A673 (cell line): ENCODE measurements at regions of chr4 and their contacts with region 1.

Region 1: GRCh38 chr4:16196478-16197393 is 29.5 kb downstream of the TAPT1 start:
- DNase-seq: peak; percentile 92
- H3K4me3 ChIP-seq: peak overlapping the region; percentile 24
- H3K27ac ChIP-seq: peak overlapping the region; percentile 47
- H3K4me1 ChIP-seq: peaks cover 60% of the 10 kb centered on the region
- H3K27me3 ChIP-seq: no peaks in the 10 kb centered on the region
- CTCF ChIP-seq: peak; percentile 66

Region 2: GRCh38 chr4:16026160-16026761 is 170.5 kb before region 1 on chr4:
- CTCF ChIA-PET with region 1: interaction called, 3 read pairs
- POLR2A ChIA-PET with region 1: no interaction called
- intact Hi-C with region 1: loop called (anchors 1 kb)
- DNase-seq: peak; percentile 75
- H3K4me3 ChIP-seq: peak overlapping the region; percentile 29
- H3K27ac ChIP-seq: no peak overlapping the region
- H3K4me1 ChIP-seq: peaks cover 32% of the 10 kb centered on the region
- H3K27me3 ChIP-seq: no peaks in the 10 kb centered on the region
- CTCF ChIP-seq: peak; percentile 87

Region 3: DNA sequence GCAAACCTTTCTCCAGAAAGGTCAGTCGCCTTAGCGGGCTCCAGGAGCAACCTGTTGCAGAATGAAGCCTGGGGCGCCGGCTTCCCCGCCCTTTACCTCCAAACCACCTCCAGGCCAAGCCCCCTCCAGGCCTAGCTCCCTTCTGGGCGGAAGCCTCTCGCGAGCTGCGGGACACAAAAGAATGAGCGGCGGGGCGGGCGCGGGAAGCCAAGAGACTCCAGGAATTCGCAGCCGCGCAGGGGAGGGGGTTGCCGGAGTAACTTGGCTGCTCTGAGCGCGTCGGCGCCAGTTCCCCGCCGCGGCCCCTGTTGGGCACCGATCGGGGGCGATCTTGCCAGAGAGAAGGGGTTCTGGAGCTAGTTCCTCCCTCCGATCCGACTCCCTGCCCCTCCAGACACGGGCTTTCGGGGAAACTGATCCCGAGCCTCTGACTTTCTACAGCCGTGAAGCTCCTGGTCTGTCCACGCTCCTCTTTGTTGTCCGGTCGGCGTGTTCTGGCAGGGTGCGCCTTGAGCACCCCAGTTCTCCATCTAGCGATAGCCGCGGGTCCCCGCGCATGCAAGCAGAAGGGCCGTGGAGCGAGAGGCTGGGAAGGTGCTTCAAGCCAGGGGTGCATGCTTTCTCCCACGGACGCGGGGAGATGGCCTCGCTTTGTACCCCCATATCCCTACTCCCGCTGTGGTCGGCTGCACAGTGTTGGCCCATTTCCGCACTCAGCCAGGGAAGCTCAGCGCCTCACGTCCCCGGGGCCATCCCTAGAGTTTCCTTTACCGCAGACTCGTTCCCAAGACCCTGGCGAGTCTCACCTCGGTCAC is 114.1 kb before region 1 on chr4:
- CTCF ChIA-PET with region 1: interaction called, 3 read pairs
- POLR2A ChIA-PET with region 1: no interaction called
- intact Hi-C with region 1: loop called (anchors 5 kb)
- DNase-seq: peak; percentile 81
- H3K4me3 ChIP-seq: peak overlapping the region; percentile 52
- H3K27ac ChIP-seq: peak overlapping the region; percentile 10
- H3K4me1 ChIP-seq: no peaks in the 10 kb centered on the region
- H3K27me3 ChIP-seq: peaks cover 42% of the 10 kb centered on the region
- CTCF ChIP-seq: 0 out of 2 replicates have a peak, but pooled peaks have one; percentile 9

Region 4: DNA sequence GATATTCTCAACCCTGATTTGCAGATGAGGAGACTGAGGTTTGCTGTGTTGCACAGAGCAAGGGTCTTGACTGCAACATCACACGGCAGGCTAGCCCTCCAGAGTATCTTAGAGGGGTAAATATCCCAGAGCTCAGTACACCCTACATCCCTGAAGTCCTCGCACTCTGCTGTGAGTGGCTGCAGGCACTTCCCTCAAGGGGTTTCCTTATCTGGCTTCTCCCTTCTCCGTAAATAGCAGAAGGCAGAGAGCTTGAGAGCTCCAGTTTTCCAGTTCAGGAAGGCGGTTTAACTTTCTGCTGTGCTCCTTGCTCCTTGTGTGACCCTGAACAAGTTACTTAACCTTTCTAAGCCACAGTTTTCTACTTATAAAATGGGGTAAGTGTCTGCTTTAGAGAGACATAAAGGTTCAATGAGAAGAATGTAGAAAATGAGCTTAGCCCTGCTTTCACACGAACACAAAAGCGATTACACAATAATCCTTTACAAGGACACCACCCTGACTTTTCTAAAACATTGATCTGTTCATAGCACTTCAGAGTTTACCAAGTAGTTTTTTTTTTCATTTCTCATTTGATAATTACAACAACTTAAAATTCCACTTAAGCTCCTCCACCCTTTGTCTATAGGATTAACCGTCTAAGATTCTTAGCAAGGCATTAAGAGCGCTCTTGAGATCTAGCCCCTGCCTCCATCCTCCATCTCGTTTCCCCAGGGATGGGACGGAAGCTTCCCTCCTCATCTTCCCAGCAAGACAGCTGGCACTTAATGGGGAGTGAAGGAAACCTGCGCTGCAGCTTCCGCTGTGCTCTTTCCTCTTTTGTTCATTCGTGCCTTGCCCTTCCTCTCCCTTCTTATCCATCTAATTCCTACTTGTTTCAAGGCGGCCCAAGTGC is 38.9 kb before region 1 on chr4:
- CTCF ChIA-PET with region 1: interaction called, 11 read pairs
- POLR2A ChIA-PET with region 1: no interaction called
- intact Hi-C with region 1: loop called (anchors 2 kb)
- DNase-seq: peak; percentile 99
- H3K4me3 ChIP-seq: no peak overlapping the region
- H3K27ac ChIP-seq: peak overlapping the region; percentile 35
- H3K4me1 ChIP-seq: peaks cover 69% of the 10 kb centered on the region
- H3K27me3 ChIP-seq: no peaks in the 10 kb centered on the region
- CTCF ChIP-seq: no peak

Region 5: DNA sequence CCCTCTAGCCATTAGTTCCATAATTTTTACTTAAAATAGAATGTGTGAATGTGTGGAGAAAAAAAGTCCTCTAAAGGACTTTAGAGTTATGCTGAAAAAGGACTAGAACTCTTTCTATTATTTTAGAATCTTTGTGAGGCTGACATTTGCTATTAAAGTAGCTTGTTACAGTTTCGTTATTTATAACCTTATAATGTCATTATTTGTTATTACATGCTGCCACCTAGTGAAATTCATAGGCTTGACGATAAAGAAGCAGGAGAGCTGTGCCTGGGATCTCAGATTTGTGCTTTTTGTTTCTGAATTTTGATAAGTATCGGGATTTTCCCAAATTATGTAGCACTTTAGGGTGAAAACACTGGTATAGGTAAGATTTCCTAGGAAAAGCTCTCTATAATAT is 68.1 kb after region 1 on chr4:
- CTCF ChIA-PET with region 1: interaction called, 3 read pairs
- POLR2A ChIA-PET with region 1: interaction called, 3 read pairs
- intact Hi-C with region 1: loop called (anchors 5 kb)
- DNase-seq: peak; percentile 67
- H3K4me3 ChIP-seq: no peak overlapping the region
- H3K27ac ChIP-seq: no peak overlapping the region
- H3K4me1 ChIP-seq: peaks cover 5% of the 10 kb centered on the region
- H3K27me3 ChIP-seq: no peaks in the 10 kb centered on the region
- CTCF ChIP-seq: peak; percentile 65

Region 6: GRCh38 chr4:16757080-16757521 is 560.4 kb after region 1 on chr4:
- CTCF ChIA-PET with region 1: no interaction called
- POLR2A ChIA-PET with region 1: no interaction called
- intact Hi-C with region 1: no loop called
- DNase-seq: no peak
- H3K4me3 ChIP-seq: no peak overlapping the region
- H3K27ac ChIP-seq: no peak overlapping the region
- H3K4me1 ChIP-seq: peaks cover 20% of the 10 kb centered on the region
- H3K27me3 ChIP-seq: no peaks in the 10 kb centered on the region
- CTCF ChIP-seq: no peak